PC-9 (cell line): ENCODE measurements at regions of chr7 and their contacts with region 1.

Region 1: DNA sequence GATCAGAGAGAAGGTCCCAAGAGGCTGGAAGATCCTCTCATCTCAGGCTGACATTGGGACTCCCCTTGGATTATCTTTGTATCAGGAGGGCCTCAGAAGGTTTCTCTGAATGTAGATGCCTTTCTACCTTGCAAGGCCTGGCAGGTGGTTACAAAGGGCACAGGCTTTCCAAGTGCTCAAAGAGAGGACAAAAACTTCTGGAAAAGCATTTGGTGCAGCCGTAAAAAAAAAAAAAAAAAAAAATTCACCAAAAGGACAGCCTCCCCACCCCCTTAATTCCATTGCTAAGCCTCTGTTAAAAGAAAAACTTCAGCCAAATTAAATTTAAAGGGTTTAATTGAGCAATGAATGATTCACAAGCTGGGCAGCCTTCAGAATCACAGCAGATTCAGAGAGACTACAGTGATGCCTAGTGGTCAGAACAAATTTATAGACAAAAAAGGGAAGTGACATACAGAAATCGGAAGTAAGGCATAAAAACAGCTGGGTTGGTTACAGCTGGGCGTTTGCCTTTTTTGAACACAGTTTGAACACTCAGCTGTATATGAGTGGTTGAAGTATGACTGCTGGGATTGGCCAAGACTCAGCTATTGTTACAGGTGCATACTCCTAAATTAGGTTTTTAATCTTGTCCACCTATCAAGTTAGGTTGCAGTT is 42.5 kb upstream of the LRGUK start:
- DNase-seq: no peak
- H3K4me3 ChIP-seq: no peak overlapping the region
- H3K27ac ChIP-seq: no peak overlapping the region
- H3K4me1 ChIP-seq: no peaks in the 10 kb centered on the region
- H3K27me3 ChIP-seq: no peaks in the 10 kb centered on the region
- CTCF ChIP-seq: no peak

Region 2: GRCh38 chr7:132705146-132705545 is 1379.5 kb before region 1 on chr7:
- CTCF ChIA-PET with region 1: no interaction called
- POLR2A ChIA-PET with region 1: interaction called, 14 read pairs
- intact Hi-C with region 1: no loop called
- DNase-seq: no peak
- H3K4me3 ChIP-seq: no peak overlapping the region
- H3K27ac ChIP-seq: no peak overlapping the region
- H3K4me1 ChIP-seq: no peaks in the 10 kb centered on the region
- H3K27me3 ChIP-seq: peaks cover 80% of the 10 kb centered on the region
- CTCF ChIP-seq: no peak

Region 3: DNA sequence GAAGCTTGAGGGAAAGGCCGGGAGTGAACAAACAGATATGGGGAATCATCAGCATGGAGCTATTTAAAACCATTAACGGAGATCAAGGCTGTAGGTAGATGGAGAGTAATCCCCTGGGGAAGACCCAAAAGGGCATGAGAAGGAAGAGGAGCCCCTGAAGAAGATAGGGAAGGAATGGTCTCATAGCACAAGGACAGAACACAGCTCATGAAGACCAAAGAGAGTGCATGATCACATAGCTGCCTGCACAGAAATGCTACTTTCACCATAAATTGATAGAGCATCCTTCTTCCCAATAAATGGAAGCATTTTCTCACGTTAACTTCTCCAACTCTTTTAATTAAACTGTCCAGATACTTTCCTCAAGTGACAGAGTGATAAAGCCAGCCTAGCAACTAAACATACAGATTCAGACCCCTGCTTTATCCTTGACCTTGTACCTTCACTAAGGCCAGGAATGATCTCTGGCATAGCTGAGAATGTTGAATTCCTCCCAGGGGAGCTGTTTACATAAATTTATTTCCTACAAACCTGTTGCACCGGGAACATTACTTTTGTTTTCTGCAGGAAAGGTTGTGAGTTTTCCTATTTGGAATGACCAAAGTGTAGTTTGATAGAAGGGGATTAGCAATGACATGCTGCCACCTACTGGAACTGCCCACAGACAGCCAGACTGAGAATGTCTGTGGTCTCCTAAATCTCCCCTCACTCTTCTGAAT is 68.2 kb before region 1 on chr7:
- CTCF ChIA-PET with region 1: no interaction called
- POLR2A ChIA-PET with region 1: no interaction called
- intact Hi-C with region 1: no loop called
- DNase-seq: peak in 1 of 2 experiments; percentile 16
- H3K4me3 ChIP-seq: no peak overlapping the region
- H3K27ac ChIP-seq: no peak overlapping the region
- H3K4me1 ChIP-seq: no peaks in the 10 kb centered on the region
- H3K27me3 ChIP-seq: no peaks in the 10 kb centered on the region
- CTCF ChIP-seq: peak; percentile 76